ENCODE measurements at regions of chr4 and their contacts with region 1.

Region 1: GRCh38 chr4:74311696-74312313 is 3.5 kb downstream of the EPGN start:
- DNase-seq: peak; percentile 46
- H3K4me3 ChIP-seq: no peak overlapping the region
- H3K27ac ChIP-seq: no peak overlapping the region
- H3K4me1 ChIP-seq: peaks cover 12% of the 10 kb centered on the region
- CTCF ChIP-seq: peak; percentile 82

Region 2: GRCh38 chr4:74189331-74190043 is 122.3 kb before region 1 on chr4:
- CTCF ChIA-PET with region 1: no interaction called
- POLR2A ChIA-PET with region 1: no interaction called
- intact Hi-C with region 1: loop called (anchors 1 kb)
- DNase-seq: peak; percentile 70
- H3K4me3 ChIP-seq: no peak overlapping the region
- H3K27ac ChIP-seq: no peak overlapping the region
- H3K4me1 ChIP-seq: no peaks in the 10 kb centered on the region
- CTCF ChIP-seq: peak; percentile 92

Region 3: GRCh38 chr4:74297539-74297938 is 14.3 kb before region 1 on chr4:
- CTCF ChIA-PET with region 1: no interaction called
- POLR2A ChIA-PET with region 1: interaction called, 11 read pairs
- intact Hi-C with region 1: no loop called
- DNase-seq: peak; percentile 18
- H3K4me3 ChIP-seq: no peak overlapping the region
- H3K27ac ChIP-seq: no peak overlapping the region
- H3K4me1 ChIP-seq: peaks cover 17% of the 10 kb centered on the region
- CTCF ChIP-seq: no peak

Region 4: GRCh38 chr4:74501579-74501978 is 189.8 kb after region 1 on chr4:
- CTCF ChIA-PET with region 1: no interaction called
- POLR2A ChIA-PET with region 1: no interaction called
- intact Hi-C with region 1: no loop called
- DNase-seq: no peak
- H3K4me3 ChIP-seq: no peak overlapping the region
- H3K27ac ChIP-seq: no peak overlapping the region
- H3K4me1 ChIP-seq: no peaks in the 10 kb centered on the region
- CTCF ChIP-seq: no peak

Region 5: GRCh38 chr4:74570095-74570494 is 258.3 kb after region 1 on chr4:
- CTCF ChIA-PET with region 1: no interaction called
- POLR2A ChIA-PET with region 1: no interaction called
- intact Hi-C with region 1: no loop called
- DNase-seq: no peak
- H3K4me3 ChIP-seq: no peak overlapping the region
- H3K27ac ChIP-seq: no peak overlapping the region
- H3K4me1 ChIP-seq: no peaks in the 10 kb centered on the region
- CTCF ChIP-seq: no peak